Lower leg skin (tissue), 4 donors: ENCODE measurements at regions of chr12 and their contacts with region 1.

Region 1: DNA sequence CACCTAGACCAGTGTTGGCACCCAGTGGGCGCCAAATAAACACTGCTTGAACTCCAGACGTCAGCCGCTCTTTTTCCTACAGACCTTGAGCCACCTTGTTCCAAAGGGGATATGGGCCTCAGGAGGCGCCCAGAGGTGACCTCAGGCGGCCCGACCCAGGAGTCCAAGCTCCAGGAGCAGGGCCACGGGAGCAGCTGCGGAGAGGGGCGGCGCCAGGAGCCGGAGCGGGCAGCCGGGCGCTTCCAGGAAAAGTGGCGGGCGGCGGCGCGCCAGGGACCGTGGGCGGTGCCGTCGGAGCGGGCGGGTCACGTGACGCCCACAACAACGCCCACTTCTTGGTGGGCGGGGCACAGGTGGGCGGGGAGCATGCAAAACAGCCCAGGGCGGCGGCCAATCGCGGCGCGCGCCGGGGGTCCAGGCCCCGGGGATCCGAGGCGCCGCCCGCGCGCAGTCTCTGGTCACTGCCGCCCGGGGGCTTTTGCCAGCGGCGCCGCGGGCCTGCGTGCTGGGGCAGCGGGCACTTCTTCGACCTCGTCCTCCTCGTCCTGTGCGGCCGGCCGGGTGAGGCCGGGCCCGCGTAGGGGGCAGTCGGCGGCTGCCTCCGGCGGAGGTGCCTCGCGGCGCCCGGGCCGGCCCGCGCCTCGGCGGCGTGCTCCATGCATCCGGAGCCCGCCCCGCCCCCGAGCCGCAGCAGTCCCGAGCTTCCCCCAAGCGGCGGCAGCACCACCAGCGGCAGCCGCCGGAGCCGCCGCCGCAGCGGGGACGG is at the start of gene ORAI1:
- DNase-seq: peak; percentile 94 to 99
- H3K4me3 ChIP-seq: peak within 1 kb of the TSS; percentile 42
- CTCF ChIP-seq: no peak
- POLR2A ChIP-seq: peak in 1 of 2 donors; percentile 49
- total RNA-seq, gene ORAI1: 65.1 to 77.7 (median 69.6) TPM

Region 2: GRCh38 chr12:120437754-120438494 is 1188.3 kb before region 1 on chr12 and contains the start of gene COX6A1:
- intact Hi-C with region 1: no loop called
- DNase-seq: peak; percentile 94 to 99
- H3K4me3 ChIP-seq: peak within 1 kb of the TSS; percentile 56
- CTCF ChIP-seq: no peak
- POLR2A ChIP-seq: no peak
- total RNA-seq, gene COX6A1: 638 to 834 (median 702) TPM

Region 3: DNA sequence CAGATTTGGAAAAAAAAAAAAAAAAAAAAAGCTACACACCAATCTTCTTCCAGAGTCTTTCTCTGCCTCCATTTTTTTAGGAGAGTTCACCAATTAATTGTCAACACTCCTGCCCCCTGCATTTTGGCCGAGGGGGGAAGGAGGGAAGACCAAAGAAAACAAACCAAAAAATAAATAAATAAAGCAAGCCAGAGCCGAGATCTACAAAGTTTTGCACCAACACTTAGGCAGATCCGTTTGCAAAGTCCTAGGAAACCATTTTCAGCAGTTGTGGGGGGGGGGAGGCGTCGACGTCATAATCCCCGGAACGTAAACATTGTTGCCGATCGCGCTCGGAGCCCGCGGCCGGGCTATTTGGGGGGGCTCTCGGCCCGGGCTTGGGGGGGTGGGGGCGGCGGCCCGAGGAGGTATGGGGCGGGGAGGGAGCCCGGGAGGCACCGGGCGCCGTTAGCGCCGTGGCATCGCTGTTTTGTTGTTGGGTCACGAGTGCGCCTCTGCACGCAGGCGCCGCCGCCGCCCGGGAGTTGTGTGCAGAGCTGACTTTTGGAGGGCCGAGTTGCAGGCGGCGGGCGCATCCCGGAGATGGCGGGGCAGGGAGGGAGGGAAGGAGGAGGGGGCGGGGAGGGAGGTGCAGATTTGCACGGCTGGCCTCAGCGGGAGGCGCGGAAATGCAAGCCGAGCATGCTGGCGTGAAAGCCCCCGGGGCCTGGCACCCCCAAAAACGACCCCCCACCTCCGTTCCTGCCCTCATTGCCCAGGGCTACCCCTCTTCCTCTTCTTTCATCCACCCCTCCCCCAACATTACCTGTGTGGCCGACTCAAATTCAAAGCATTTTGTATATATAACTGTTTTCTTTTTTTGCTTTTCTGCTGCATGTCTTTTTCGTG is 46.0 kb before region 1 on chr12:
- intact Hi-C with region 1: loop called (anchors 10 kb)
- DNase-seq: peak; percentile 53 to 94
- H3K4me3 ChIP-seq: peak overlapping the region; percentile 41
- CTCF ChIP-seq: no peak
- POLR2A ChIP-seq: no peak

Region 4: GRCh38 chr12:121673003-121673511 is 46.8 kb after region 1 on chr12:
- intact Hi-C with region 1: loop called (anchors 5 kb)
- DNase-seq: peak; percentile 50 to 90
- H3K4me3 ChIP-seq: no peak overlapping the region
- CTCF ChIP-seq: no peak
- POLR2A ChIP-seq: no peak

Region 5: DNA sequence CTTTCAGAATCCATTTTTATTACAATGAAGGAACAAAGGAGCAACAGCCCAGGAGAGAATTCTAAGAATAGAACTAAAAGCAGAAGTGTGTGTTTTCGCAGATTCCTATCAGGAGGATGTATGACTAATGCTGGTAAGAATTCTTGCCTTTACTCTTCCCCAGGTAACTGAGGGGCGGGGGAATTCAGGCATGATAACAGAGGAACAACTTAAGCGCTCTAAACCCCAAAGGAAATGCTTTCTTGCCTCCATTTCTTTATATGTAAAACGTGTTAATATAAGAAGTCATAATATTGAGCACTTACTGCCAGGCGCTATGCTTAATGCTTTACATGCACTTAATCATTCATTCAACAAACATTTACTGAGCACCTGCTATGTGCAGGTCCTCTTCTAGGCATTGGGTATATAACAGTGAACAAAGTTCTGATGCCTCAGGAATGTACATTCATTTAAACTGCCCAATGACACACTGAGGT is 1099.8 kb after region 1 on chr12:
- intact Hi-C with region 1: no loop called
- DNase-seq: no peak
- H3K4me3 ChIP-seq: no peak overlapping the region
- CTCF ChIP-seq: no peak
- POLR2A ChIP-seq: no peak